ENCODE measurements at regions of chr16 and their contacts with region 1.

Region 1: GRCh38 chr16:88770461-88771293 is 14.3 kb downstream of the PIEZO1 start:
- DNase-seq: peak; percentile 67 to 98 (median 80)
- ATAC-seq: peak; percentile 80
- H3K4me3 ChIP-seq: peak overlapping the region; percentile 38
- H3K27ac ChIP-seq: peak overlapping the region; percentile 91
- H3K4me1 ChIP-seq: peaks cover 75 to 100% of the 10 kb centered on the region in 2 experiments
- H3K27me3 ChIP-seq: no peaks in the 10 kb centered on the region
- CTCF ChIP-seq: peak in 2 of 3 experiments; percentile 14 to 26; a peak in 1 of 6 replicates
- EP300 ChIP-seq: peak; percentile 86
- POLR2A ChIP-seq: peak; percentile 74; the same call in 1 of the 2 replicates
- RAD21 ChIP-seq: peak; percentile 21 to 37

Region 2: GRCh38 chr16:88686439-88687253 is 84.0 kb before region 1 on chr16 and contains the start of gene SNAI3:
- CTCF ChIA-PET with region 1: no interaction called
- POLR2A ChIA-PET with region 1: no interaction called
- in situ Hi-C with region 1: no loop called
- intact Hi-C with region 1: loop called (anchors 5 kb)
- DNase-seq: peak; percentile 97 to 98 (median 98)
- ATAC-seq: peak; percentile 94
- H3K4me3 ChIP-seq: peak within 1 kb of the TSS; percentile 60
- H3K27ac ChIP-seq: peak within 1 kb of the TSS; percentile 44; the same call in 2 of the 3 replicates
- H3K4me1 ChIP-seq: peaks cover 38 to 75% of the 10 kb centered on the region in 2 experiments
- H3K27me3 ChIP-seq: no peaks in the 10 kb centered on the region
- CTCF ChIP-seq: no peak
- EP300 ChIP-seq: no peak
- POLR2A ChIP-seq: peak; percentile 74
- RAD21 ChIP-seq: no peak
- polyA plus RNA-seq, gene SNAI3: 0.04 TPM in 1 of 2 experiments, not detected in the other

Region 3: DNA sequence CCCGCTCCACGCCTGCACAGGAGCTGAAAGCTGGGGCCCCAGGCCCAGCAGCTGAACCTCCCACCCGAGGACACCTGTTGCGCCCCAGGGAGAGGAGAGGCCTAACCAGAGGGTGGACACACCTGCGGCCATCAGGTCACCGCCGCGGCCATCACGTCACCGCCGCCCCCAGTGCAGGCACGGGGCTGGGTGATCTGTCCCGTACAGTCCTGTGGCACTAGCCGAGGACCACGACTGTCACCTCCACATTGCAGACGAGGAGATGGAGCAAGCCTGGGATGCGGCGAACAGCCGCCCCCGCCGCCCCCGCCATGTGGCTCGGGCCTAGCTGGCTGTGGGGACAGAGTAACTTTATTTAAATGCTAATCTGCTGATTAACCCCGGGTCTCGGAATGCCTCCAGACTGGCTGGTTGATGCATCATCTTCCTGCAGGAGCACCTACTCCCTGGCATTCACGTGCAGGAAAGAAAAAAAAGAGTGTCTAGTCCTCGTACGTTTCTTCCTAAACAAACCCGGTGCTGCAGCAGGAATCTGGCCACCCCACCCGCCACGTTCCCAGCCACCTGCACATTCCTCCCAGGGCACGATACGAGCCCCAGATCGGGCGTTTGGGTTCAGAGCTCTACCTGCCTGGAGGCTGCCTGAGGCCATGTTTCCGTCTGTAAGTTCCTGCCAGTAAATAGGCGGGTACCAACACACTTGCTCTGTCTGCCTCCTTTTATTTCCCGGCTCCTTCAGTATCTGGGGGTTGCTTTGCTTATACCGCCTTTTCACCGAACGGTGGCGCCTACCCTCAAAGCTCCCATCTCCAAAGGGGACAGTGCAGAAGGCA is 15.5 kb before region 1 on chr16:
- CTCF ChIA-PET with region 1: interaction called, 4 read pairs
- POLR2A ChIA-PET with region 1: interaction called, 102 read pairs
- in situ Hi-C with region 1: no loop called
- intact Hi-C with region 1: no loop called
- DNase-seq: no peak
- ATAC-seq: no peak
- H3K4me3 ChIP-seq: no peak overlapping the region
- H3K27ac ChIP-seq: no peak overlapping the region
- H3K4me1 ChIP-seq: peaks cover 13 to 86% of the 10 kb centered on the region in 2 experiments; a peak in 4 of 5 replicates
- H3K27me3 ChIP-seq: no peaks in the 10 kb centered on the region
- CTCF ChIP-seq: no peak
- EP300 ChIP-seq: no peak
- POLR2A ChIP-seq: no peak
- RAD21 ChIP-seq: no peak

Region 4: GRCh38 chr16:88803264-88803987 is 32.7 kb after region 1 on chr16 and contains the start of gene CDT1:
- CTCF ChIA-PET with region 1: no interaction called
- POLR2A ChIA-PET with region 1: interaction called, 12 read pairs
- in situ Hi-C with region 1: no loop called
- intact Hi-C with region 1: loop called (anchors 1 kb)
- DNase-seq: peak; percentile 91 to 99 (median 96)
- ATAC-seq: peak; percentile 6
- H3K4me3 ChIP-seq: peak within 1 kb of the TSS; percentile 89
- H3K27ac ChIP-seq: peak within 1 kb of the TSS; percentile 86
- H3K4me1 ChIP-seq: peaks cover 29 to 85% of the 10 kb centered on the region in 2 experiments
- H3K27me3 ChIP-seq: no peaks in the 10 kb centered on the region; a peak in 1 of 5 replicates
- CTCF ChIP-seq: no peak
- EP300 ChIP-seq: no peak
- POLR2A ChIP-seq: peak; percentile 71
- RAD21 ChIP-seq: no peak
- polyA plus RNA-seq, gene CDT1: 0.92 to 1.6 TPM

Measured in K562 (cell line).